ENCODE measurements at regions of chr11 and their contacts with region 1.

Region 1: GRCh38 chr11:73342633-73343032 is 33.6 kb upstream of the RELT start:
- DNase-seq: peak; percentile 30
- H3K4me3 ChIP-seq: peak overlapping the region; percentile 37 to 45
- H3K27ac ChIP-seq: no peak overlapping the region
- H3K4me1 ChIP-seq: peaks cover 33% of the 10 kb centered on the region
- H3K27me3 ChIP-seq: no peaks in the 10 kb centered on the region
- CTCF ChIP-seq: no peak
- POLR2A ChIP-seq: no peak

Region 2: GRCh38 chr11:73095613-73096012 is 247.0 kb before region 1 on chr11:
- intact Hi-C with region 1: no loop called
- DNase-seq: peak; percentile 63
- H3K4me3 ChIP-seq: no peak overlapping the region
- H3K27ac ChIP-seq: peak overlapping the region in 1 of 2 donors; percentile 70
- H3K4me1 ChIP-seq: peaks cover 17% of the 10 kb centered on the region
- H3K27me3 ChIP-seq: no peaks in the 10 kb centered on the region
- CTCF ChIP-seq: no peak
- POLR2A ChIP-seq: no peak

Region 3: DNA sequence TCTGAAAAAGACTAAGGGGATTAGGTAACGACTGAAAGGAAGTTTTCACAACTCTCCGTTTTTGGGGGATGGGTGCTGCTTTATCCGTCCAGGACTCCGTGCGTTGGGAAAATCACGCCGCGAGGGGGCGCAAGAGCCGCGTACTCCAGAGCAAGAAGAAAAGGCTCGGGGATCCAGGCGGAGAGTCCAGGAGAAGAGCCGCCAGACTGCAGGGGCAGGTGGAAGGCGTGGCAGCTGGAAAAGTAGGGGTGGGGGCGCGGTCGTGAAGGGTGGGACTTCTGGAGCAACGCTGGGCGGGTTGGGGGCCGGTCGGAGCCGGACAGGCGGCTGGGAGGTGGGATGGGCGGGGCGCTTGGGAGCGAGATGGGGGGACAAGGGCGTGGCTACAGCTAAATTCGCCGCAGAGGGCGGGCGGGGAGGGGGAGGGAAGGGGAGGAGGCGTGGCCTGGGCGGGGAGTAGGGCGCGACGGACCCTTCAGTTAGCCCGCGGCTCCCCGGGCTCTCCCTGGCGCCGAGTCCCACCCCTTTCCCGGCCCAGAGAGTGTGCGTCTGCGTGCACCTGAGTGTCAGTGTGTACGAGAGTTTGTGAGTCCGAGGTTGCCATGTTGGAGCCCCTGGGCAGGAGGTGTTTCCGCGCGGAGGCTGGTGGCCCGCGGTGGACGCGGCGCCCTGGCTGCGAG is 35.2 kb before region 1 on chr11:
- intact Hi-C with region 1: loop called (anchors 5 kb)
- DNase-seq: peak; percentile 99
- H3K4me3 ChIP-seq: peak overlapping the region; percentile 70 to 83
- H3K27ac ChIP-seq: peak overlapping the region; percentile 94 to 96
- H3K4me1 ChIP-seq: peaks cover 13% of the 10 kb centered on the region
- H3K27me3 ChIP-seq: no peaks in the 10 kb centered on the region
- CTCF ChIP-seq: peak; percentile 90 to 95 (median 93)
- POLR2A ChIP-seq: no peak

Region 4: DNA sequence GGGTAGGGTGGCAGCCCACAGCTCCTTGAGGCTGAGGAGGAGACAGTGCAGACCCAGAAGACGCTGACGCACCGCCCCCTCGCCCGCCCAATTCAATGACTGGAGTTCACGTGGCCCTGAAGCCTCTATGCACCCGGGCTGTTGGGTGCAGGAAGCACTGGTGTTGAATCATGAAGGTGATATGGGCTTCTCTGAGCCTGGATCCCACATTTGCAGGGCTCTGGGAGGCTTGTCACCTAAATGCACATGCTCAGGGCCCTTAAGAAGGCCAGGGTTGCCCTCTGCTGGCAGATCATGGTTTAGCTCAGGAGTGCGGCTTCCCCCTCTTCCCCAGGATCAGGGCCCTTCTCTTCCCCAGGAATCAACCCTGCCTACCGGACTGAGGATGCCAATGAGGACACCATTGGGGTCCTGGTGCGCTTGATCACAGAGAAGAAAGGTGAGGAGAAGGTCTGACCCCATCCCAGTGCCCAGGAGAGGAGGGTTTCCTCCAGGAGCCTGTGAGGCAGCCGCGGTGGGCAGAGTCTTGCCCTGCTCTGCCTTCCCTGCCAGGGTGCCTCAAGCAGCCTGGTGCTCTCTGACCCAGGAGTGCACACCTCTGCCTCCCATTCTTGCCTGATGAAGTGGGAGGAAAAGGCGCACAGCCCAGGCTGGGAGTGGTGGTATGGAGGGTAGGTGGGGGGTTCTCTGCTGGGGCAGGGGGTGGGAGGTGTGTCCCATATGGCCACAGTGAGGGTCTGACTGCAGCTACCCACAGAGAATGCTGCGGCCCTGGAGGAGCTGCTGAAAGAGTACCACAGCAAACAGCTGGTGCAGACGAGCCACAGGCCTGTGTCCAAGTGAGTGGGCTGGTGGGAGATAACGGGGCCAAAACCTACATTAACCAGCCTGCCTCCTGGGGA is 51.1 kb after region 1 on chr11:
- intact Hi-C with region 1: loop called (anchors 10 kb)
- DNase-seq: peak; percentile 86
- H3K4me3 ChIP-seq: no peak overlapping the region
- H3K27ac ChIP-seq: no peak overlapping the region
- H3K4me1 ChIP-seq: no peaks in the 10 kb centered on the region
- H3K27me3 ChIP-seq: no peaks in the 10 kb centered on the region
- CTCF ChIP-seq: peak; percentile 64 to 68 (median 65)
- POLR2A ChIP-seq: no peak